Activated CD4-positive, alpha-beta T cell treated with anti-CD3 and anti-CD28 coated beads for 36 hours (primary cell): ENCODE measurements at regions of chr12 and their contacts with region 1.

Region 1: DNA sequence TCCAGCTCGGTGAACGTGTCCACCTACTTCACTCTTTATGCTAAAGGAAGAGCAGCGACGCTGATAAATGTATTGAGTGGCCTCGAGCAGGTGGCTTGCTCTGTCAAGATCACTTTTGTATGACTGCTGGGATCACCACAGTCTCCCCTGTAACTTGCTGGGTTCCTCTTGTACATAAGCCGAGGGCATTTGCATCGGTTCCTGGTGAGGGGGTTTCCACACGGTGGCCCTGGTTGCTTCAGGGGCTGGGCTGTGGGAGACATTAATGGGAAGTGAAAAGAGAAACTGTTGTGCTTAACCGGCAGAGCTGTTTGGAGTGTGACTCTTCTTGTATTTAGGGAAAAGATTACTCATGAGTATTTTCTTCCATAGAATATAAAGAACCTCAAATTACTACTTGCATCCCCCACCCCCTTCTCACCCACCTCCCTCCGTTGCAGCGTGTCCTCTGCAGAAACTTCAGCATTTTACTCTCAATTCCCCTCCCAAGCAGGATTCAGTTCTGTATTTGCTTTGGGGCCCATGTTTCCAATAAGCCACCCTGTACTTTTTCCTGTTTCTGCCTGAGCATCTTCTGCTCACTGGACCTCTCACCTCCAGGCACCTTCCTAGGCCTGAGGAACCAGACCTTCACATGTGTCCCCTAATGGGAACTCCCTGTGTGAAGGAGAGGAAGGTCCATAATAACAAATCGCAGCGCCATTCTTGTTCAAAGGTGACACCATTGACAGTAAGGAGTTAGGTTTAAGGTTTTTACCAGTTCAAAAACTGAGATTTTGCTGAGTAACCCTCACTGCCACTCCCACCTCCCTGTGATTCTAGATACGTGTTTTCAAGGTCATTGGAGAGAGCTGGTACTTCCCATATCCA is 187.0 kb downstream of the ETV6 start:
- DNase-seq: peak; percentile 88
- ATAC-seq: peak; percentile 86
- H3K4me3 Mint-ChIP-seq: peak overlapping the region; percentile 45
- H3K27ac Mint-ChIP-seq: peak overlapping the region; percentile 95
- H3K4me1 Mint-ChIP-seq: peaks cover 77% of the 10 kb centered on the region
- H3K27me3 Mint-ChIP-seq: no peaks in the 10 kb centered on the region

Region 2: DNA sequence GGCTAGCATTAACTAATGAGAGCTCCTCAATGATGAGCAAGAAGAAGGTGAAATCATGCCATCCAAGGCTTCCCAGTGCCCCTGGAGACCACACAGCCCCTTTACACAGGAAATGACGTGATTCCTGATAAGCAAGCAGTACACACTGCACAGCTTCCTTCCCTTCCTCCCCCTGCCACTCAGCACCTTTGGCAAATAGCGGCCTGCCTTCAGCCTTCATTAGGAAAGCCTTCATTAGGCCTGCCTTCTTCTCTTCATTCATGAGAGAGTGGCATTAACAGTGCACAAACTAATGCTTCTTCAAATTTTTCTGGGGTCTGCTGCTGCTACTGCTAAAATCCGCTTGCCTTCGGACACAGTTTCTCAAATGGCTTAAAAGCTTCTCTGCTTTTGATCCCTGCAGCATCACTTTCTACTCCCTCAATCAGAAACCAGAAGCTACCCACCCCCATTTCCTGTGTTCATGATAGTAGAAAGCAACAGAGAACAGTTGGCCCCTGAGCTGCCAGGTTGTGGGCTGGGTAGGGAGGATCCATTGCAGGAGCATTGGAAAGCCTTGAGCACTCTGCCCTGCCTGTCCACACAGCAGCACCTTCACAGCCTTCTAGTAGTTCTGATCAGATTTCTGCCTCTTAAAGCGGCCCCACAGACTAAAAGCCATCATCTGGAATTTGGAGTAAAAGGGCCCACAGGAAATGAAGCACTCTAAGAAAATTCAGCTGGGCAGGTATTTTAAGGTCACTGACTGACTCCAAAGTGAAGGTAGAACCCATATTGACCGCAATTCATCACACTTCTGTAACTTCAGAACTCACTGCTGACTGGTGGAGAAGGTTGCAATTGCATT is 290.8 kb before region 1 on chr12:
- CTCF ChIA-PET with region 1: no interaction called
- POLR2A ChIA-PET with region 1: no interaction called
- intact Hi-C with region 1: loop called in 1 of 2 experiments (anchors 1 kb)
- DNase-seq: peak; percentile 67
- ATAC-seq: peak; percentile 82
- H3K4me3 Mint-ChIP-seq: peak overlapping the region; percentile 53
- H3K27ac Mint-ChIP-seq: peak overlapping the region; percentile 92
- H3K4me1 Mint-ChIP-seq: peaks cover 59% of the 10 kb centered on the region
- H3K27me3 Mint-ChIP-seq: no peaks in the 10 kb centered on the region

Region 3: GRCh38 chr12:11730299-11731041 is 106.0 kb before region 1 on chr12:
- CTCF ChIA-PET with region 1: interaction called, 5 read pairs
- POLR2A ChIA-PET with region 1: no interaction called
- intact Hi-C with region 1: loop called in 1 of 2 experiments (anchors 5 kb)
- DNase-seq: peak; percentile 39
- ATAC-seq: no peak
- H3K4me3 Mint-ChIP-seq: peak overlapping the region; percentile 21
- H3K27ac Mint-ChIP-seq: peak overlapping the region; percentile 88
- H3K4me1 Mint-ChIP-seq: peaks cover 86% of the 10 kb centered on the region
- H3K27me3 Mint-ChIP-seq: no peaks in the 10 kb centered on the region

Region 4: DNA sequence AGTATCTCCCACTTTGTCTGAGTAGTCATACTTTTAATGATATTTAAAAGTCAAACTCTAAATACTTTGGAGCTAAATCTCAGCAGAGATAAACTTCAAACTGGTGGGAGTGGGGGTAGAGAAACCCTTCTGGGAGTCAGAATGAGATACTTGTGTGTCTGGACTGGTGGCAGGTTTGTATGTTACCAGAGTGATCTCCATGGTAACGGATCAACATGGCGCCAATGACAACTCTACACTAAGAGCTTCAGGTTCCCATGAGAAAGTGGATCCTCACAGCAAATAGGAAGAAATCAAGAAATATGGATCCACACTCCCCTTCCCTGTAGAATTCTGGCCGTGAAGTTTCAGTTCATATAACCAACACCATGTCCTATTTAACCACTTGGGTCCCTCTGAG is 65.2 kb before region 1 on chr12:
- CTCF ChIA-PET with region 1: no interaction called
- POLR2A ChIA-PET with region 1: interaction called, 6 read pairs
- intact Hi-C with region 1: loop called (anchors 1 to 2 kb)
- DNase-seq: peak; percentile 48
- ATAC-seq: peak; percentile 45
- H3K4me3 Mint-ChIP-seq: no peak overlapping the region
- H3K27ac Mint-ChIP-seq: peak overlapping the region; percentile 79
- H3K4me1 Mint-ChIP-seq: peaks cover 94% of the 10 kb centered on the region
- H3K27me3 Mint-ChIP-seq: no peaks in the 10 kb centered on the region

Region 5: DNA sequence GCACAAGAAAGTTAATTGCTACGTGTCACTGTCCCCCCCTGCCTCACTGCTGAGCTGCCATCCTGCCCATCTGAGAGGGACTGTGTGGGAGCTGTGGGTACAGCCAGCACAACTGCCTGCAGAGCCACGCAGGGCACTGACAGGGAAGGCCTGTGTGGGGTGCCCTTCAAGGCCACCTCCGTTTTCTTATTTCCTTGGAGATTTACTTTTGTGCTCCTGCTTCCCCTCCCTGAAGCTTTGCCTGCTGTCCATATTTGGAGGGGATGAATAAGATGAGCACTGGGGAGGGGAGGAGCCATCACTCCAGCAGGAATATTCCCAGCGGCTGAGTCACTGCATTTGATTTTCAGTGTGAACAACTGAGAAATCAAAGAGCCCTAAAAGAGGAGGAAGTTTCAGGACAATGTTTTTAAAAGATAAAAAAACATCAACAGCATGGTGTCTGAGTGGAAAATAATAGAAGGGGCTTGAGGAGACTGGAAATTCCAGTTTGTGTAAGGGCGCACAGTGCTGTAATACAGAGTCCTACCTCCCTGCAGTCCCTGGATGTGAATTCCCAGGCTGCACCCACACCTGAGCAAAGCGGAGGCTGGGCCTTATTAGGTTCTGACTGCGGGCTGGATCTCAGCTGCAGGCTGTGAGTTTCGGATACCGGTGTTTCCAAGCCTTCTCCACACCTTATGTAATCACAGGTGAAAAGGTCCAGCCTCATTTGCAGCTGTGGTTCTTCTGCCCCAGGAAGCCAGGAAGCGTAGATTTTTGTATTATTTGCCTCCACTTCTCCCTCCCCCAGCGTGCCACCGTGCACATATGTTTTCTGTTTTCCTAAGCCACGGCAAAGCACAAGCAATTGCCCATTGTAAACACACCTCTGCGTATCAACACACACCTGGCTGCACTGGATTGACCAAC is 41.6 kb after region 1 on chr12:
- CTCF ChIA-PET with region 1: no interaction called
- POLR2A ChIA-PET with region 1: no interaction called
- intact Hi-C with region 1: loop called (anchors 1 to 2 kb)
- DNase-seq: peak; percentile 32
- ATAC-seq: peak; percentile 28
- H3K4me3 Mint-ChIP-seq: no peak overlapping the region
- H3K27ac Mint-ChIP-seq: peak overlapping the region; percentile 73
- H3K4me1 Mint-ChIP-seq: peaks cover 52% of the 10 kb centered on the region
- H3K27me3 Mint-ChIP-seq: no peaks in the 10 kb centered on the region

Region 6: GRCh38 chr12:11907625-11908024 is 71.1 kb after region 1 on chr12:
- CTCF ChIA-PET with region 1: no interaction called
- POLR2A ChIA-PET with region 1: no interaction called
- intact Hi-C with region 1: loop called (anchors 1 to 2 kb)
- DNase-seq: no peak
- ATAC-seq: no peak
- H3K4me3 Mint-ChIP-seq: no peak overlapping the region
- H3K27ac Mint-ChIP-seq: no peak overlapping the region
- H3K4me1 Mint-ChIP-seq: peaks cover 24% of the 10 kb centered on the region
- H3K27me3 Mint-ChIP-seq: peaks cover 2% of the 10 kb centered on the region